Heart left ventricle (tissue), 16 donors: ENCODE measurements at regions of chr13 and their contacts with region 1.

Region 1: DNA sequence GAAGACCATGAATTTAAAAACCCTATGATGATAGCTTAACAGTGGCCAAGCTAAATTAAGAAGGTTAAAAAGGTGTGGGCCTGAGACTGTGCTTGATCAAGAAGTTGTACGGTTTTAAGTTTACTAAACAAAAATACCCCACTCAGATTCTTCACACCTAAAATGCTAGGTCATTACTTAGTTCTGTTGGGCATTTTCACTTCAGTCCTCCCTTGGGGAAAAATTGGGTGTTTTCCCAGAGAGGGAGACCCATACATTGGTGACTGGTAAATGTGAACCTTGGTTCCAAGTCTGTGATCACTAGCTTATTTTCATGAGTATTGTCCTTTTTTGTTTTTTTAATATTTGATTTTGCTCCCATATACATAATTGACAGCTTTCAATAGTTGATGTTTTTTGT is 44.4 kb downstream of the MTUS2 start:
- DNase-seq: no peak
- ATAC-seq: no peak
- H3K4me3 ChIP-seq: no peak overlapping the region
- H3K27ac ChIP-seq: no peak overlapping the region
- H3K4me1 ChIP-seq: peaks cover 0 to 16% (median 0%) of the 10 kb centered on the region in 12 donors
- H3K27me3 ChIP-seq: no peaks in the 10 kb centered on the region
- CTCF ChIP-seq: no peak
- POLR2A ChIP-seq: no peak

Region 2: GRCh38 chr13:29059800-29060199 is 195.3 kb after region 1 on chr13:
- intact Hi-C with region 1: loop called in 1 of 10 experiments (anchors 5 kb)
- DNase-seq: peak in 4 of 5 donors; percentile 27 to 60 (median 56)
- ATAC-seq: peak; percentile 76 to 81 (median 78)
- H3K4me3 ChIP-seq: no peak overlapping the region
- H3K27ac ChIP-seq: no peak overlapping the region
- H3K4me1 ChIP-seq: peaks cover 0 to 8% (median 0%) of the 10 kb centered on the region in 12 donors
- H3K27me3 ChIP-seq: no peaks in the 10 kb centered on the region
- CTCF ChIP-seq: no peak
- POLR2A ChIP-seq: no peak

Region 3: DNA sequence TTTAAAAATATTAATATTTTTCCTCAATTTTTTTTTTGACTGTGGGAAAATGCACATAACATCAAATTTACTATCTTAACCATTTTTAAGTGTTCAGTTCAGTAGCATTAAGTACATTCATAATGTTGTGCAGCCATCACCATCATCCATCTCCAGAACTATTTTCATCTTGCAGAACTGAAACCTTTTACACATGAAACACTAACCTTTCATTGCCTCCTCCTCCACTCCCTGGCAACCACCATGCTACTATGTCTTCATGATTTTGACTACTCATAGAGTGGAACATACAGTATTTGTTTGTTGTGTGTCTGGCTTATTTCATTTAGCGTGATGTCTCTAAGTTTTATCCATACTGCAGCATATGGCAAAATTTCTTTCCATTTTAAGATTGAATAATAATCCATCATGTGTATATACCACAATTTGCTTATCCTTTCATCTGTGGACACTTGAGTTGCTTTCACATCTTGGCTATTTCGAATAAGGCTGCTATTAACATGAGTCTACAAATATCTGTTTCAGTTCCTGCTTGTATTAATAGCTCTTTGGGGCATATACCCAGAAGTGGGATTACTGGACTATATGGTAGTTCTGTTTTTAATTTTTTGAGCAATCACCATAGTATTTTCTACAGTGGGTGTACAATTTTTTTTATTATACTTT is 332.0 kb after region 1 on chr13:
- intact Hi-C with region 1: no loop called
- DNase-seq: no peak
- ATAC-seq: no peak
- H3K4me3 ChIP-seq: no peak overlapping the region
- H3K27ac ChIP-seq: no peak overlapping the region
- H3K4me1 ChIP-seq: no peaks in the 10 kb centered on the region
- H3K27me3 ChIP-seq: no peaks in the 10 kb centered on the region
- CTCF ChIP-seq: no peak
- POLR2A ChIP-seq: no peak